MCF 10A (cell line): ENCODE measurements at regions of chr21 and their contacts with region 1.

Region 1: DNA sequence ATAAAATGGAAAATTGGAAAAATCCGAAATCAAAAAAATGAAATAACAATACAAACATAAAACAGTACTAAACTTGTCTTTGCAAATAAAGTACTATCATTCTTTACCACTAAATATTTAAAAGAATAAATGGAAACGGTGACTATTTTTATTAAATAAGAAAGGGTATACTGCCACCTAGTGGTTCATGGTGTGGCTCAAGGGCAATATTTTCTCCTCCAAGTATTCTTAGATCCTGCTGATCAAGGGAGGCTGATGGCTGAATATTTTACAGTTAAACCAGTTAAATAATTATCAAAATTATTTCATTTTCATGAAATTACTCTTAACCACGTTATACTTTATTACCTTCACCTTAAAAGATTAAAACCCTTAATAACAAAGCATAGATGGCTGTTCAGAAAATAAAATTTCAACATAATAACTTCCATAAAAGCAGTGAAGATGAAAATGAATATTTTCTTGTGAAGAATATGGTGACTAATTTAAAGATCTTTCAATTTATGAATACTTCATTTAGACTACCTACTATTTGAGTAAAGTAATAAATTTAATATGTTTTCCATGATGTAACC is 1793.9 kb downstream of the NCAM2 start:
- DNase-seq: peak; percentile 60
- H3K4me3 Mint-ChIP-seq: no peak overlapping the region
- H3K27ac Mint-ChIP-seq: no peak overlapping the region
- H3K4me1 Mint-ChIP-seq: no peaks in the 10 kb centered on the region
- H3K27me3 Mint-ChIP-seq: no peaks in the 10 kb centered on the region
- CTCF ChIP-seq: peak; percentile 61

Region 2: DNA sequence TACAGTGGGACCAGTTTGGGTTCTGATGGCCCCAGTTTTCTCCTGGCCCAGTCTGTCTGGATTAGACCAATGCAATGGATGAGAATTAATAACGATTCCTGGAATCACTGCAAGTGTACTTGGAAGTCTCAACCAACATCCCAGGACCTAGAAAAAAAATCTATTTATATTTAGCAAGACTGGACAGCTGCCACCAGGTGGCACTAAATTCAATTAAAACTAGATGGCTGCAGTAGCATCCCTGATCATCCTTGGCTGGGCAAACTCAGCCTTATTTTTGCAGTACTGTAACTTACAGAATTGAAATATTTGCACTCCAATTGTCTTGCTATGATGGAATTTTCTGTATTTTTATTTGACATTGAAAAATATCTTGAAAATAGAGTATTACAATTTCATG is 1628.2 kb before region 1 on chr21:
- CTCF ChIA-PET with region 1: no interaction called
- POLR2A ChIA-PET with region 1: no interaction called
- intact Hi-C with region 1: loop called (anchors 2 kb)
- DNase-seq: peak; percentile 70
- H3K4me3 Mint-ChIP-seq: no peak overlapping the region
- H3K27ac Mint-ChIP-seq: no peak overlapping the region
- H3K4me1 Mint-ChIP-seq: no peaks in the 10 kb centered on the region
- H3K27me3 Mint-ChIP-seq: no peaks in the 10 kb centered on the region
- CTCF ChIP-seq: peak; percentile 48

Region 3: DNA sequence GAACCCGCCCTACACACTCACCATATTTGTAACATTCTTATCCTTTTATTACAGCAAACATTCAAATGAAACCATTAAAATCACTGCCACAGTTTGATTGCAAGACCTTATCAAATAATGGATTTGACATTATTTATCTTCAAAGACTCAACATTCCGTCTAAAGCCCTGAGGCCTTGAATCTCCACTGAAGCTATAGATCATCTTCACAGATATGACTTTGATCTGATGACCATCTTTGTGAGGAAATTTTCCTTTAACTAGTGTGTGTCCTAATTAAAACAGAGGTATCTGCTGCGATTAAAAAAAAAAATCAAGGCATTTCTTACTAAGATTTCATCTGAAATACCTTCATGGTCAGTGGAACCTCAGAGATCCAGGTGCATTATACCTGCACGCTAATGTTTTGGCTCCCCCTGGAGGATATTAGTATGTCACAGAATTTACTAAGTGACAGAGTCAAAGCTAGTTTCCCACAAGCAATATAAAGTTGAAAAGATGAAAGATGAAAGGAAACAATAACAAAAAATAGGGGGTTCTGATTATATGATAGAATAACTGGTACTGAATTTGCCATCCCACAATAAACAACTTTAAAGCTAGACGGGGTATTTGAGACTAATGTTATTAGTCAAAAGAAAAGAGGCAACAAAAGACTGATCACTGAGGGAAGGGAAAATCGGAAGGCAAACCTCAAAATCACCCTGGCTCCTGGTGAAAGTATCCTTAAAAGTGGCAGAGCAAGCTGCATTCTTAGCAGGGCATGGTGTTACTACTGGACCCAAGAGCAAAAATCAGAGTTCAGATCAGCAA is 870.4 kb before region 1 on chr21:
- CTCF ChIA-PET with region 1: interaction called, 5 read pairs
- POLR2A ChIA-PET with region 1: no interaction called
- intact Hi-C with region 1: loop called (anchors 10 kb)
- DNase-seq: peak; percentile 60
- H3K4me3 Mint-ChIP-seq: no peak overlapping the region
- H3K27ac Mint-ChIP-seq: no peak overlapping the region
- H3K4me1 Mint-ChIP-seq: peaks cover 12% of the 10 kb centered on the region
- H3K27me3 Mint-ChIP-seq: no peaks in the 10 kb centered on the region
- CTCF ChIP-seq: peak; percentile 48

Region 4: DNA sequence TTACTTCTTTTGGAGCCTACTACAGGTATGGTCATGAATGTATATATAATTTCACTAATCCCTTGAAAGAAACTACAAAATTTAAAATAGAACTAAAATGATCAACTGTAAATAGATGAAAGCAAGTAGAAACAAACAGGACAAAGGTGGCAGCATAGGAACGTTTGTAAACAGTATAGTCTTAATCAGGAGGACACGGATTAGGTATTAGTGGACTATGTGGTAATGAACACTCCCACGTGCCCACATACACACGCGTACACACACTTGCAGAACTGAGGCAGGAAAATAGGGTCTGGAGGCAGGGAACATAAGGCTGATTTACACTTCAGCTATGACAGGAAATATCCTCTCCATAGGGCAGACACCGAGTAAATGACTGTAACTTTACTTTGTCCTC is 396.1 kb before region 1 on chr21:
- CTCF ChIA-PET with region 1: no interaction called
- POLR2A ChIA-PET with region 1: no interaction called
- intact Hi-C with region 1: no loop called
- DNase-seq: no peak
- H3K4me3 Mint-ChIP-seq: peak overlapping the region; percentile 54
- H3K27ac Mint-ChIP-seq: peak overlapping the region; percentile 76
- H3K4me1 Mint-ChIP-seq: peaks cover 15% of the 10 kb centered on the region
- H3K27me3 Mint-ChIP-seq: no peaks in the 10 kb centered on the region
- CTCF ChIP-seq: no peak

Region 5: DNA sequence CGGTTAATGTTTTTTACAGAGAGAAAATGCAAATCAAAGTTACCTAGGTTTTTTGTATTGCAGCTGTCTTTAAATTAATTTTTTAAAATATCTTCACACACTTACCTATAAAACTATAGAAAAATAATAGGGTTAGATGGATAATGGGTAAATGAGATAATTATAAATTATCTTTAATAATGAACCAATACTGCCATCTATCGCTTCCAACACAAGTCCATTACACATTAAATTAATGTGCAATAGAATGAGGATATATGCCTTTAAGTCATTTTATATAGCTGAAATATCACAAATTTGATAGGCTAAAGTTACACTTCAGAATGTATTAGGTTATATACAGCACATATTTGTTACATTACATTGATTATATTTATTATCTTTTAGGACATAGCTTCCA is 602.4 kb after region 1 on chr21:
- CTCF ChIA-PET with region 1: no interaction called
- POLR2A ChIA-PET with region 1: no interaction called
- intact Hi-C with region 1: loop called (anchors 10 kb)
- DNase-seq: no peak
- H3K4me3 Mint-ChIP-seq: no peak overlapping the region
- H3K27ac Mint-ChIP-seq: no peak overlapping the region
- H3K4me1 Mint-ChIP-seq: no peaks in the 10 kb centered on the region
- H3K27me3 Mint-ChIP-seq: no peaks in the 10 kb centered on the region
- CTCF ChIP-seq: peak; percentile 18